ENCODE measurements at regions of chr15 and their contacts with region 1.

Region 1: DNA sequence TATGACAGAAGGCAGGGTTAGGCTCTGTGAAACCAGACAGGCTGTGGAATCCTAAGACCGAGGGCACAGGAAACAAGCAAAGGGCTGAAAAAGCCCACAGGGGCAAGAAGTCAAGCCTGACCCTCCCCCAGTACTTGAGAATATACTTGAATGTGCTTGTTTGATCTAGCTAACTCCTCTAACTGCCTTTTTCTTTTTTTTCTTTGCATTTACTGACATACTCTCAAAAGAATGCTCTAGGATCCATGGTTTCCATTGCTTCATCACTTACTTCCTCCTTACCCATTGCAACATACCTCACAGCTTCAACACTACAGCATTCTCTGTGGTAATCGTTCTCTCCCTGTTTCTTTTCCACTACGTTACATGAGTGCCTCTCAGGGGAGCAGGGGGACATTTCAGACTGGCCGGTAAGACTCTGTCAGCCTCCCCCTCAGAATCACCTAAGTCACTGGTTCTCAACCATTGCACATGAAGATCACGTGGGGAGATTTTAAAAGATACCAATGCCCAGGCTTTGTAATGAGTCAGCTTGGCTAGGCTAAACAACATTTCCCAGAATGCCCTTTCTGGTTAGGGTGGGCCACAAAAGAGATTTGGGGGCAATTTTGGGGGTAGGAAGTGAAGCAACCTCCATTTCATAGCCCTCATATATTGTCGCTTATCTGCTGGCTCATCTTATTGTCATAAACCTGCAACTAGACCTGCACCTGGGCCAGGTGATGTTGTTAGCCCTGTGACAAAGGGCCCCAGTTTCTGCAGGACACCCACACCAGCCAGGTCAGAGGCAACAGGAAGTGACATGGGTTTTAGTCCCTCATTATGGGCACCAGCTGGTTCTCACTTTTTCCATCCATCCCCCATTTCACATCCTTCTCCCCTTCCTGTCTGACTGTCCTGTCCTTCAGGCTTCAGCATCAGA is 24.6 kb upstream of the RSL24D1 start:
- DNase-seq: no peak

Region 2: GRCh38 chr15:54282228-54282836 is 939.0 kb before region 1 on chr15:
- intact Hi-C with region 1: no loop called
- DNase-seq: peak in 2 of 10 donors; percentile 39 to 44

Region 3: GRCh38 chr15:55290528-55291057 is 69.2 kb after region 1 on chr15:
- intact Hi-C with region 1: loop called (anchors 1 kb)
- DNase-seq: peak; percentile 70 to 97 (median 83)

Region 4: DNA sequence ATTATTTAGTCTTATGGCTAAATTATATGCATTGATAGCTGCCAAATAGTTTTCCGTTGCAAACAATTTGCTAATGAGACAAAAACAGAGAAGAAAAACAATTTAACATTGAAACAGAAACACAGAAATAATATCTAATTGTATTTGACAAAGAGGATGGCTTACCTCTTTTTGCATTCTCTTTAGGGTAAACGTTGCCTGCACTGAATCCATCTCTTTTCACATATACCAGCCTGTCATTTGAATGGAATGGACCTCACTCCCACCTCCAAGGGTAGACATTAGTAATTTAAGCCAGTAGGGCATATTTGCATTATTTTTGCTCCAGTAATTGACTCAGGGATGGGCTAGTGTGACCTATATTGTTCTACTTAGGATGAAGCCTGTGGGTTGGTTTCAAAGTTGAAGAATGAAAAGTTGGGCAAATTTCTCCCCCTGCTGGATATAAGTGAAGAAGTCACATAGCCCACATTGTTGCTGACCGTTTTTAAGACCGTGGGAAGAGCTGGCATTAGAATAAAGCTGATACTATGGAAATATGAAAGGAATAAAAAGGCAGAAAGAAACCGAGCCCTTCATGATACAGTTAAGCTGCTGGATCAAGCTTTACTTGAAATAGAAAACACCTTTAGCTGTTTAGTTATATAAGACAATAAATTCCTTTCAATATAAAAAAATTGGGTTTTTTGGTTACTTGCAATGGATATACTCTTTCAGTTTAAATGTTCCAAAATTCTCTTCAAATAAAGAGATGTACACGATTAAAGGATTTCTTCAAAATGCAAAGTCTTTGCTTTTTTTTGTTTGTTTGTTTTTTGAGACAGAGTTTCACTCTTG is 213.9 kb after region 1 on chr15:
- intact Hi-C with region 1: loop called (anchors 5 kb)
- DNase-seq: no peak